ENCODE measurements at regions of chr6 and their contacts with region 1.

Region 1: GRCh38 chr6:45555981-45556771 is 178.4 kb upstream of the SUPT3H start:
- DNase-seq: no peak
- H3K4me3 Mint-ChIP-seq: no peak overlapping the region
- H3K27ac Mint-ChIP-seq: no peak overlapping the region
- H3K4me1 Mint-ChIP-seq: peaks cover 49% of the 10 kb centered on the region
- H3K27me3 Mint-ChIP-seq: no peaks in the 10 kb centered on the region

Region 2: DNA sequence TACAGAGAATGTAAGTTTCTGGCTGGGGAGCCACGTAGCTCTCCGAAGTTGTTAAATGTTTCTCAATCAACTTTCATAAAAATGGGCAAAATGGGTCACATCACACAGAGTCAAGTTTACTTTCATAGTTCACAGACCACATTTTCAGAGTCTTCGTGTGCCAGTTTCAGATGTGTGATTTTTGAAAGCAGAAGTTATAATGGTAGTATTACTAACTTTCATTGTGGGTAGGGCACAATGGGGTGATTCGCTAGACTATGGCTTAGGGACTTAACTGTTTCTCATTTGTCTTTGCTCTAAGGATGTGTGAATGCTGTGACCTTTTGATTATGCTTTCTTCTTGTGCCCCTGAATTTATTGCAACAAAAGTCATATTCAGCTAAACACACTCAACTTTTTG is 69.4 kb before region 1 on chr6:
- CTCF ChIA-PET with region 1: no interaction called
- POLR2A ChIA-PET with region 1: no interaction called
- intact Hi-C with region 1: loop called (anchors 2 kb)
- DNase-seq: peak; percentile 45
- H3K4me3 Mint-ChIP-seq: peak overlapping the region; percentile 21
- H3K27ac Mint-ChIP-seq: peak overlapping the region; percentile 67
- H3K4me1 Mint-ChIP-seq: peaks cover 56% of the 10 kb centered on the region
- H3K27me3 Mint-ChIP-seq: no peaks in the 10 kb centered on the region

Region 3: GRCh38 chr6:45584127-45584526 is 28.0 kb after region 1 on chr6:
- CTCF ChIA-PET with region 1: no interaction called
- POLR2A ChIA-PET with region 1: interaction called, 3 read pairs
- intact Hi-C with region 1: loop called (anchors 1 kb)
- DNase-seq: peak; percentile 66
- H3K4me3 Mint-ChIP-seq: no peak overlapping the region
- H3K27ac Mint-ChIP-seq: peak overlapping the region; percentile 73
- H3K4me1 Mint-ChIP-seq: peaks cover 52% of the 10 kb centered on the region
- H3K27me3 Mint-ChIP-seq: no peaks in the 10 kb centered on the region

Region 4: DNA sequence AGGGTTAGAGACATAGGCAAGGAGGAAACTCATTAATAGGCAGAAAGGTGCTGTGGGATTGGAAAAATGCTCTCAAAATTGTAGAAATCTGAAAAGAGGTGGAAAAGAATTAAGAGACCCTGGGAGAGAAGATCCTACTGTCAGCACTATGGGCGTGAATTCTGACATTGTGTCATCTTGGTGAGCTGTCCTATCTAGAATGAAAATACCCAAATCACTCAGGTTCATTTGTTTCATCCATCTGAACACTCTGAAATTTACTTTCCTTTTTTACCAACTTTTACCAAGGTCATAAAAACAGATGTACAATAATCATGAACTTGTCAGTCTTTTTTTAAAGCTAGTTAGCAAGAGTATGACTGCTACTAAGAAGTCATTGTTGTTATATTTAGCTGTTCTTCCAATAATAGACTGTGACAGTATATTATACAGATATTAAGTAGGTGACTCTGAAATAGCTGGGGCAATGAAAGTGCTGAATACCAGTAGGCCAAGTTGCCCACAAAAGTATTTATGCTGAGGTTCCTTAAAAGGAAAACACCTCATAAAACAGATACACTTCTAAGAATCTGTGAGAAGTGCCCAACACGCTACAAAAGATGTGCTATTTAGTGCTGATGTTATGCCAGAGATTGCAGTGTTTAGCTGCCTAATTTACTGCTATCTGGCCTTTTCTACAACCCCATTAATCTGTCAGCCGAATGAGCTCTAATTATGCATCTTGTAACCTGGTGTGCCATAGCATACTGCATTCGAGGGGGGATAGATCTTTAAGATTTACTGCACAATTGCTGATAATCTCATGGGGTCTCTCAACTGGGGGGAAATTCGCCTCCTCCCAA is 39.1 kb after region 1 on chr6:
- CTCF ChIA-PET with region 1: no interaction called
- POLR2A ChIA-PET with region 1: no interaction called
- intact Hi-C with region 1: loop called (anchors 1 kb)
- DNase-seq: no peak
- H3K4me3 Mint-ChIP-seq: no peak overlapping the region
- H3K27ac Mint-ChIP-seq: peak overlapping the region; percentile 78
- H3K4me1 Mint-ChIP-seq: peaks cover 67% of the 10 kb centered on the region
- H3K27me3 Mint-ChIP-seq: no peaks in the 10 kb centered on the region

Region 5: DNA sequence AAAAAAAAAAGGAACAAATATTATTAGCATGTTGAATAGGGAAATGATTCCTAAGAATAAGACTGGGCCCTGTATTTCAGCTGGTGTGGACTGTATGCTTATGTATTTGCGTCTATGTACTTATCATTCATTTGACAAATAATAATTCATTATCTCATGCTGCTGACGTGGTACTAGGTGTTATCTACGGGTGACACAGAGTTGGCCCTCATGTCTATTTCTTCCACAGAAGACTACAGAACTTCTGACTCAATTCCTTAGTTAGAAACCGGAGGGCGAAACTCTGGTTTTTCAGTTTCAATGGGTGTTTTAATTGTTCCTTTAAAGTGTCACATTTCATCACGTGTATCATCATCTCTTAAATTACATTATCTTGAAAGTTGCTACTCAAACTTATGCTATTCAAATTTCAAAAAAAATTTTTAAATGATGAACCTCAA is 153.6 kb after region 1 on chr6:
- CTCF ChIA-PET with region 1: interaction called, 3 read pairs
- POLR2A ChIA-PET with region 1: no interaction called
- intact Hi-C with region 1: loop called (anchors 1 kb)
- DNase-seq: peak; percentile 52
- H3K4me3 Mint-ChIP-seq: no peak overlapping the region
- H3K27ac Mint-ChIP-seq: no peak overlapping the region
- H3K4me1 Mint-ChIP-seq: peaks cover 46% of the 10 kb centered on the region
- H3K27me3 Mint-ChIP-seq: no peaks in the 10 kb centered on the region

Measured in activated CD4-positive, alpha-beta memory T cell treated with anti-CD3 and anti-CD28 coated beads for 36 hours (primary cell).